GM12878 (cell line): ENCODE measurements at regions of chr18 and their contacts with region 1.

Region 1: DNA sequence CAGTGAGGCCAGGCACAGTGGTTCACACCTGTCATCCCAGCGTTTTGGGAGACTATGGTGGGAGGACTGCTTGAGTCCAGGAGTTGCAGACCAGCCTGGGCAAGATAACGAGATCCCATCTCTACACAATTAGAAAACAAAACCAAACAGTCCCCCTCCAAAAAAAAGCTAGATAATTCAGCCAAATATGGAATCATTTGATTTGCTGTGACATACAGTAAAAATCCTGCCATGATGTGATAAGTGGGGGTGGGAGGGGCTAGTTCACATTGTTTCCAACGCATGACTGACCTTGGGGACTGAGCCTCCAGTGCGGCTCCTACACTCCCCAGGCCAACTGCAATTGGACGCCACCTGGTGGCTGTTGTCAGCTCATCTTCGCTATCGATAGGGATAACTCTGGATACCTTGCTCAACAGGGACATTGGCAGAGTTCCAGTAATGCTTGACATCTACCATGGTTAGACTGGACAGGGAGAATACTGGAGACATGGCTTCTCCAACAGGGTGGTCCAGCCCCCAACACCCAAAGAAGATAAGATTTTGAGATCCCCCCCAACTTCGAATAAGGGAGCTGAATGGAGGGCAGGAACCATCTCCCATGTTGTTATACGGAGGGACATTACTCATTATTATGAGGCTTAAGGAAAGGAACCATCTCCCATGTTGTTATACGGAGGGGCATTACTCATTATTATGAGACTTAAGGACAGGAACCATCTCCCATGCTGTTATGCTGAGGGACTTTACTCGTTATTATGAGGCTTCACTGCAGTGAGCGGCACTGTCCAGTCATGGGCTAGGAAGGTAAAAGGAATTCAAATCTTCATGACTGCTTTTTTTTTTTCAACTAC is 135.9 kb downstream of the TGIF1 start:
- DNase-seq: no peak
- ATAC-seq: peak; percentile 84
- H3K4me3 ChIP-seq: peak overlapping the region; percentile 28; the same call in 1 of the 2 replicates
- H3K27ac ChIP-seq: peak overlapping the region; percentile 75
- H3K4me1 ChIP-seq: peaks cover 30% of the 10 kb centered on the region
- H3K27me3 ChIP-seq: no peaks in the 10 kb centered on the region
- CTCF ChIP-seq: peak; percentile 70 to 76 (median 72)
- EP300 ChIP-seq: no peak; a peak in 1 of 4 replicates
- POLR2A ChIP-seq: no peak
- RAD21 ChIP-seq: peak; percentile 76

Region 2: GRCh38 chr18:3281456-3282400 is 304.2 kb before region 1 on chr18:
- CTCF ChIA-PET with region 1: interaction called, 28 read pairs
- POLR2A ChIA-PET with region 1: no interaction called
- RAD21 ChIA-PET with region 1: interaction called, 16 read pairs
- SMC1A ChIA-PET with region 1: interaction called, 20 read pairs
- in situ Hi-C with region 1: no loop called
- intact Hi-C with region 1: loop called (anchors 2 kb)
- DNase-seq: no peak
- ATAC-seq: peak; percentile 69
- H3K4me3 ChIP-seq: no peak overlapping the region
- H3K27ac ChIP-seq: no peak overlapping the region
- H3K4me1 ChIP-seq: peaks cover 24% of the 10 kb centered on the region
- H3K27me3 ChIP-seq: no peaks in the 10 kb centered on the region
- CTCF ChIP-seq: peak; percentile 35 to 66 (median 46); a peak in 4 of 6 replicates
- EP300 ChIP-seq: no peak
- POLR2A ChIP-seq: no peak
- RAD21 ChIP-seq: peak; percentile 75

Region 3: DNA sequence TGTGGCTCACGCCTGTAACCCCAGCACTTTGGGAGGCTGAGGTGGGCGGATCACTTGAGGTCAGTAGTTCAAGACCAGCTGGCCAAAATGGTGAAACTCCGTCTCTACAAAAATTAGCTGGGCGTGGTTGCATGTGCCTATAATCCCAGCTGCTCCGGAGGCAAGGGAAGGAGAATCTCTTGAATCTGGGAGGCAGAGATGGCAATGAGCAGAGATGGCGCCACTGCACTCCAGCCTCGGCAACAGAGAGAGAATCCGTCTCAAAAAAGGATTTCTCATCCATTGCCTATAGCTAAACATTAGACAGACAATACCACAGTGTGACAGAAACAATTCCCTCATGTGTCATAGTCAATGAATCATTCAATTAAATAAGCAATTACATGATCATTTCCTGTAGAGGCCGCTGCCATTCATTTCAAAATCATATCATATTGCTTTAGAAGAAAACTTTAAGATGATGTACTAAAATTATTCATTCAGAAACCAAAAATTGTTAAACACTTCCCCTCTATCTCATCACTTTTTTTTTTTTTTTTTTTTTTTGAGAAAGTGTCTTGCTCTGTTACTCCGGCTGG is 205.4 kb before region 1 on chr18:
- CTCF ChIA-PET with region 1: interaction called, 4 read pairs
- POLR2A ChIA-PET with region 1: no interaction called
- RAD21 ChIA-PET with region 1: interaction called, 3 read pairs
- SMC1A ChIA-PET with region 1: interaction called, 3 read pairs
- in situ Hi-C with region 1: no loop called
- intact Hi-C with region 1: loop called (anchors 5 kb)
- DNase-seq: no peak
- ATAC-seq: peak; percentile 37
- H3K4me3 ChIP-seq: no peak overlapping the region
- H3K27ac ChIP-seq: no peak overlapping the region
- H3K4me1 ChIP-seq: peaks cover 15% of the 10 kb centered on the region
- H3K27me3 ChIP-seq: peaks cover 0 to 2% of the 10 kb centered on the region in 2 experiments; a peak in 1 of 4 replicates
- CTCF ChIP-seq: peak in 1 of 3 experiments; percentile 8; a peak in 1 of 6 replicates
- EP300 ChIP-seq: no peak
- POLR2A ChIP-seq: no peak
- RAD21 ChIP-seq: peak; percentile 38; the same call in 1 of the 2 replicates

Region 4: GRCh38 chr18:3415110-3415509 is 170.8 kb before region 1 on chr18:
- CTCF ChIA-PET with region 1: no interaction called
- POLR2A ChIA-PET with region 1: no interaction called
- RAD21 ChIA-PET with region 1: no interaction called
- SMC1A ChIA-PET with region 1: no interaction called
- in situ Hi-C with region 1: no loop called
- intact Hi-C with region 1: no loop called
- DNase-seq: no peak
- ATAC-seq: no peak
- H3K4me3 ChIP-seq: no peak overlapping the region
- H3K27ac ChIP-seq: no peak overlapping the region
- H3K4me1 ChIP-seq: peaks cover 3% of the 10 kb centered on the region; the same call in 1 of the 2 replicates
- H3K27me3 ChIP-seq: no peaks in the 10 kb centered on the region; a peak in 2 of 4 replicates
- CTCF ChIP-seq: no peak
- EP300 ChIP-seq: no peak
- POLR2A ChIP-seq: no peak
- RAD21 ChIP-seq: no peak

Region 5: DNA sequence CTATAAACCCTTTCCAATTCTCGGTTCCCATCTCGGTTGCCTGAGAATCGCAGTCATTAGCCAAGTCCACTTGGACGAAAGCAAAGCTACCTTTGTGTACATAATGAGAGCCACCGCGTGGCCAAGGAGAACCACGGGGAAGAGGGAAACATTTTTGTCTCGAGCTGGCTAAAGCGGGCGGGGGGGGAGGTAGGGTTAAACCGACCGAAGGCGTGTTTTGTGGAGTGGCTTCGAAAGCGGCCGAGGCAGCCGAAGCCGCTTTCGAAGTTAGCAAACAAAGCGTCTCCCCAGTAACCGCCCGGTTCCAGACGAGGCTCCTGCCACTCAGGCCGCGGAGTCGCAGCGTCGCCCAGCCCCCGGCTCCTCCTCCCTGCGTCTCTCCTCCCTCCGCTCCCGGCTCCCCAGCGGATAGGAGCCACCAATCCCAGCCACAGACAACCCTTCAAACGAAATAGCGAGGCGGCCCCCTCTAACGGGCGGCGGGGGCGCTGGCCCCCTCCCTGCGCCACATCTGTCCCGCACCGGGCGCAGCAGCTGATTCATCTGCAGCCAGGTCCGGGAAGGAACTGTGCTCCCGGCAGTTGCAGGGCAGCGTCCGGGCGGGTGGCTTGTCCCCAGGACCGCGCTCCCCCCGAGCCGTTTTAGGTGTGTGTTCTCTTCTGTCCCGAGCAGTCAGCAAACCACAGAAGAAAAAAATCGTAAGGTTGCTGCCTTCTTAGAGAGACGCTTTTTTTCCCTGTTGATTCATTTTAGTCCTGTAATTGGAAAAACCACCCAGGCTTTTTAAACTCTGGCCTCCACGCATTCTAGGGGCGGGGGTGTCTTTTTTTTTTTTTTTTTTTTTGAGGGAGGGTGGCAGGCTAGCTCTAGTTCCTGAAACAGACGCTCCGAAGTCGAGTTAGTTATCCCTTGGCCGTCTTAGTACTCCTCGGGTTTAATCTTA is 137.7 kb before region 1 on chr18:
- CTCF ChIA-PET with region 1: interaction called, 79 read pairs
- POLR2A ChIA-PET with region 1: interaction called, 16 read pairs
- RAD21 ChIA-PET with region 1: interaction called, 27 read pairs
- SMC1A ChIA-PET with region 1: interaction called, 49 read pairs
- in situ Hi-C with region 1: no loop called
- intact Hi-C with region 1: loop called (anchors 2 kb)
- DNase-seq: peak; percentile 19
- ATAC-seq: peak; percentile 76
- H3K4me3 ChIP-seq: peak overlapping the region; percentile 82
- H3K27ac ChIP-seq: peak overlapping the region; percentile 73
- H3K4me1 ChIP-seq: peaks cover 19% of the 10 kb centered on the region
- H3K27me3 ChIP-seq: peaks cover 2 to 21% of the 10 kb centered on the region in 2 experiments
- CTCF ChIP-seq: 0 out of 6 replicates have a peak, but pooled peaks of 1 of the 3 experiments have one; percentile 14
- EP300 ChIP-seq: no peak
- POLR2A ChIP-seq: peak; percentile 71; the same call in 1 of the 2 replicates
- RAD21 ChIP-seq: peak; percentile 34; the same call in 1 of the 2 replicates

Region 6: DNA sequence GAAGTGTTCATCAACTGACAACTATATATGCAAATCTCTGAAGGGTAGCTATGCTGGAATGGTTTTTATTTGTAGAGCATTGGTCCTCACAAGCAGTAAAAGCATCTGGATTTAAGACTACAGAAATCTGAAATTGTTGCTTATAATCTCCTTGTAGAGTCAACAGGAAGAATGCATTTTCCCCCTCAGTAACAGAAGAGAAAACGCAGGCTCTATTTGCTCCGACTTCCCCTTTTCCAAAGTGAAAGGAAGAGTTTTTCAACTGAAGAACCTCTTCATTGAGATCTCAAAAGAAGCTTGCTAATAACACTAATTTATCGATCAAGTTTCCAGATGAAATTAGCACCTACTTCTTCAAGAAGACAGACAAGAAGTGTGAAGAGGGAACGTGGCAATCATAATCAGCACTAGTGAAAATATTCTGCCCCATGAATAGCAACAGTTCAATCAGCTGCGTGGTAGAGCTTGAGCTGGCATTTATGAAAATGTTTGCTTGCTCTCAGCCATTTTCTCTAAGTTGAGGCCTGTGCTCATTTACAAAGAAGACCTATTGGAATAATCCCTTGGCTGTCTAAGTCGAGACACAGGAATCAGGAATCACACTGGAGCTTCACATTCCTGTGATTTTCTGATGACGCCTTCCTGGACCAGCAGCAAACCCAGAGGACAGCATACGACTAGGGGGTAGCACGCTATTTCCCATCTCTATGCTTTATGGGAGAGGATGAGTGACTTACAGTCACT is 92.2 kb before region 1 on chr18:
- CTCF ChIA-PET with region 1: interaction called, 8 read pairs
- POLR2A ChIA-PET with region 1: no interaction called
- RAD21 ChIA-PET with region 1: interaction called, 3 read pairs
- SMC1A ChIA-PET with region 1: interaction called, 18 read pairs
- in situ Hi-C with region 1: no loop called
- intact Hi-C with region 1: no loop called
- DNase-seq: no peak
- ATAC-seq: peak; percentile 22
- H3K4me3 ChIP-seq: peak overlapping the region; percentile 20; the same call in 1 of the 2 replicates
- H3K27ac ChIP-seq: no peak overlapping the region
- H3K4me1 ChIP-seq: no peaks in the 10 kb centered on the region
- H3K27me3 ChIP-seq: peaks cover 0 to 4% of the 10 kb centered on the region in 2 experiments; a peak in 2 of 4 replicates
- CTCF ChIP-seq: no peak
- EP300 ChIP-seq: no peak
- POLR2A ChIP-seq: no peak
- RAD21 ChIP-seq: no peak

Region 7: DNA sequence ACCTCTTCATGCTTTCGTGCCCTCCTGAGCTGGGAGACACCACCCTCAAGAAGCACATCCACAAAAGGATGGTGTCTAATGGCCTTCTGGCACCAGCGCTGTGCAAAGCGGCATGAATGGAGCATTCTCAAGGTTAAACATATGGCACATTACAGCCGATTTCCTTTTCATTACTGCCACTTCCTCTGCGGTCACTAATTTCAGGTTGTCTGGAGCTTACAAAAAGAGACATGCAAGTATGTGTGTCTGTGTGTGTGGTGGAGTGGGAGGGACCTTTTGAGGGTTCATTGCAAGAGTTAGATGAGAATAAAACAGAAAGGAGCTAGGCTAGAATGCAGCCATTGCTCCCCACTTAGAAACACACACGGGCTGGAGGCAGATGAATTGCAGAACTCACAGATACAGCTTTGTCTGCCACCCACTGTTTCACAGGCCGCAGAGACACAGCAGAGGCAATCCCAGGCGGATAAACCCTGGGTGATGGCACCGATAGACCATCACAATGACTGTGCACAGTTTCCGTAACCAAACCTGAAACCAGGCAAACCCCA is 59.9 kb before region 1 on chr18:
- CTCF ChIA-PET with region 1: interaction called, 18 read pairs
- POLR2A ChIA-PET with region 1: interaction called, 5 read pairs
- RAD21 ChIA-PET with region 1: interaction called, 36 read pairs
- SMC1A ChIA-PET with region 1: interaction called, 20 read pairs
- in situ Hi-C with region 1: no loop called
- intact Hi-C with region 1: loop called (anchors 1 kb)
- DNase-seq: peak; percentile 65
- ATAC-seq: peak; percentile 83
- H3K4me3 ChIP-seq: peak overlapping the region; percentile 16
- H3K27ac ChIP-seq: no peak overlapping the region
- H3K4me1 ChIP-seq: peaks cover 12% of the 10 kb centered on the region
- H3K27me3 ChIP-seq: no peaks in the 10 kb centered on the region
- CTCF ChIP-seq: no peak
- EP300 ChIP-seq: peak; percentile 73 to 82; a peak in 2 of 4 replicates
- POLR2A ChIP-seq: no peak
- RAD21 ChIP-seq: 0 out of 2 replicates have a peak, but pooled peaks have one; percentile 3